Right cardiac atrium (tissue), 5 donors: ENCODE measurements at regions of chr4 and their contacts with region 1.

Region 1: DNA sequence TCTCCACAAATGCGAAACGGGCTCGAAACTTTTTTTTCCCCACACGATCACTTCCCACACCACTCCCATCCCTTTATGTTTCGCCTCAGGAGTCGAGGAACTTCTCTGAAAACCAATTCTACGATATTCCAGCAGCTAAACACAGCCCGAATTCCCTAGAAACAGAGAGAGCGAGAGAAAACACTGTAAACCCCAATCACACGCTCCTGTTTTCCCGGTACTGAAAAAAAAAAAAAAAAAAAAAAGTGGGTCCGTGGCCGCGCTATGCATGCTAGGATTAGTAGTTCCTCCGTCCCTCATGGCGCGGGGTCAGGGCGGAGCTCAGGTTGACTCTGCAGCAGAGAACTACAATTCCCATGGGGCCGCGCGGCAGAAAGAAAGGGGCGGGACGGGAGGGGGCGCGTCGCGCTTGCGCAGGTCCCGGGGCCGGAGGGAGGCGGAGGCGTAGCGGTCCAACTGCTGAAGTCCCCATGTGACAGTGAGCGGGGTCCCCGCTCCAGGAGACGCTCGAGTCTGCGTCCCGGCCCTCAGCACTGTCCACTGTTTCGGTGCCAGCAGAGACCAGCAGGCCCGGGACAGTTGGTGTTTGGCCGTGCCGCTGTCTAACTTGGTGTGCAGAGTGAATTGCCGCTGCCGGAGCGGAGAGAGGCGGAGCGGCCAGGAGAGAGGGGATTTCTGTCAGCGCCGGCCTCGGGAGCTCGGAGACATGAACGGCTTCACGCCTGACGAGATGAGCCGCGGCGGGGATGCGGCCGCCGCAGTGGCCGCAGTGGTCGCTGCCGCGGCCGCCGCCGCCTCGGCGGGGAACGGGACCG is at the start of gene SAP30:
- DNase-seq: peak; percentile 99
- ATAC-seq: peak; percentile 97 to 98
- H3K4me3 ChIP-seq: peak within 1 kb of the TSS; percentile 93
- H3K27ac ChIP-seq: peak within 1 kb of the TSS; percentile 98
- H3K4me1 ChIP-seq: peaks cover under 1% of the 10 kb centered on the region
- H3K27me3 ChIP-seq: no peaks in the 10 kb centered on the region
- total RNA-seq, gene SAP30: 18.8 to 23.7 (median 20.8) TPM

Region 2: DNA sequence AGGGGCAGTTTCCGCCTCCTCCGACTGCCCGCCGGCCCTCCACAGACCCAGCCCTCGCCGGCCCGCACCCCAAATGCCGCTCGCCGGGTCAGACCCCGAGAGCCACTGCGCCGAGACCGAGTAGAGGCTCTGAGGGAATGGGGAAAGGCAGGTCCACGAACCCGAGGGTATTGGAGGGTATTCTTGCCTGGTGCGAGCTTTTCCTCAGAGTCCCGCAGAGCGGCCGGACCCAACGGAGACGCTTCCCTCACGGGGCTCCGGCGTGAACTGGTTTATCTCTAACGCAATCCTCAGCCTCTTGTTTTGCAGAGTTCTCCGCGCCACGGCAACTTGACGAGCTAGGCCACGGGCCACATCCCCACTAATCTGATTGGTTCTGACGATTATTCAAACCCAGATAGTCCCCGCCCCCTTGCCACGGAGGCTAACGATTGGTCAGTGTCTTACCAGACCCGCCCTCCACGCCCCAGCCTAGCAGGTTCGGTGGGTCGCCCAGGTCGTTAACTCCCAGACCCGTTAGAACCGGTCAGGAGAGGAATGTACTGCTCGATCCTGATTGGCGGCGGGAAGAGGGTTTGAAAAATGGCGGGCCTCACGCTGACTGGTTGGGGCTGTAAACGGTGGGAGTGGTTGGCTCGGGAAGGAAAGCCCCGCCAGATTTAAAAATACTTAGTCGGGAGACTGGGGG is 36.5 kb before region 1 on chr4 and contains the start of gene HMGB2:
- intact Hi-C with region 1: loop called in 3 of 4 experiments (anchors 5 kb)
- DNase-seq: peak; percentile 100
- ATAC-seq: peak; percentile 99
- H3K4me3 ChIP-seq: peak within 1 kb of the TSS; percentile 91
- H3K27ac ChIP-seq: peak within 1 kb of the TSS; percentile 100
- H3K4me1 ChIP-seq: no peaks in the 10 kb centered on the region
- H3K27me3 ChIP-seq: no peaks in the 10 kb centered on the region
- total RNA-seq, gene HMGB2: 26.3 to 53.4 (median 44.3) TPM

Region 3: GRCh38 chr4:173859091-173859713 is 488.5 kb after region 1 on chr4:
- intact Hi-C with region 1: no loop called
- DNase-seq: no peak
- ATAC-seq: peak in 1 of 2 donors; percentile 61
- H3K4me3 ChIP-seq: no peak overlapping the region
- H3K27ac ChIP-seq: no peak overlapping the region
- H3K4me1 ChIP-seq: no peaks in the 10 kb centered on the region
- H3K27me3 ChIP-seq: no peaks in the 10 kb centered on the region